IMR-90 (cell line): ENCODE measurements at regions of chr12 and their contacts with region 1.

Region 1: DNA sequence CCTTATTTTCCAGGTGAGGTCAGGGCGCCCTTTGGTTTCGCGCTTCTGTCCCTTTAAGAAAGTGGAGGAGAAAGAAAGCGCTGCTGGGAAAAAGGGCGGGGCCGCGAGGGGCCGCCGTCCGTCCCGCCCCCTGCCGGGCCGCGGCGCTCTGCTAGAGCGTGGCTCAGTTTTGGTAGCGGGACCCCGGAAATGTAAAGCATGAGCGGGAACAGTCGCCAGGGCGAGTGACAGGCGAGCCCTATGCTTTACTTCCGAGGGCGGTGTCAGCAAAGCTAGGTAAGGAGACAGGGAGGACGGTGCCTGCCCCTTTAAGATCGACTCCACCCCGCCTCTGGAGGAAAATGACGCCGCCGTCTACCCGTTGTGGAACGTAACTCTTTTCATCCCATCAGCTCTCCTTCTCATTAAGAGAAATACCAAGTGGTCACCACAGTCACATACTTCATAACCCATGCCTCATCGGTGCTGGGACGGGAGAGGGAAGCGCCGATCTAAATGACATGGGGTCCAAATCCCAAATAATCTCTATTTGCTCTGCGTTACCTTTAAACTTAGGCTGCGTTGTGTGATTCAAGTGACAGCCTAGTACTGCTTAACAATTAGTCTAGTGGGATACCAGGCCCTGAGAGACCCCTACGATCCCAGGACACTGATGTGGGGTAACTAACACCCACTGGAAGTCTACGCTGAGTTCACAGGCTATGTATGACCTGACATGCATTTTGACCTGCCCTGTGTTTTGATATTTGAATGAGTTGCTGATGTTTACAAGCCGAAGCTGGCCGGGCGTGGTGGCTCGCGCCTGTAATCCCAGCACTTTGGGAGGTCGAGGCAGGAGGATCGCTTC is at the start of gene ETFBKMT:
- DNase-seq: peak; percentile 70
- ATAC-seq: peak; percentile 97
- H3K4me3 ChIP-seq: peak within 1 kb of the TSS; percentile 64
- H3K27ac ChIP-seq: peak within 1 kb of the TSS; percentile 95
- H3K4me1 ChIP-seq: peaks cover 2% of the 10 kb centered on the region
- H3K27me3 ChIP-seq: no peaks in the 10 kb centered on the region
- CTCF ChIP-seq: peak; percentile 31
- POLR2A ChIP-seq: peak; percentile 42; the same call in 1 of the 2 replicates
- RAD21 ChIP-seq: peak; percentile 3; the same call in 1 of the 2 replicates
- total RNA-seq, gene ETFBKMT: 2.5 and 3.3 TPM in 2 replicates

Region 2: DNA sequence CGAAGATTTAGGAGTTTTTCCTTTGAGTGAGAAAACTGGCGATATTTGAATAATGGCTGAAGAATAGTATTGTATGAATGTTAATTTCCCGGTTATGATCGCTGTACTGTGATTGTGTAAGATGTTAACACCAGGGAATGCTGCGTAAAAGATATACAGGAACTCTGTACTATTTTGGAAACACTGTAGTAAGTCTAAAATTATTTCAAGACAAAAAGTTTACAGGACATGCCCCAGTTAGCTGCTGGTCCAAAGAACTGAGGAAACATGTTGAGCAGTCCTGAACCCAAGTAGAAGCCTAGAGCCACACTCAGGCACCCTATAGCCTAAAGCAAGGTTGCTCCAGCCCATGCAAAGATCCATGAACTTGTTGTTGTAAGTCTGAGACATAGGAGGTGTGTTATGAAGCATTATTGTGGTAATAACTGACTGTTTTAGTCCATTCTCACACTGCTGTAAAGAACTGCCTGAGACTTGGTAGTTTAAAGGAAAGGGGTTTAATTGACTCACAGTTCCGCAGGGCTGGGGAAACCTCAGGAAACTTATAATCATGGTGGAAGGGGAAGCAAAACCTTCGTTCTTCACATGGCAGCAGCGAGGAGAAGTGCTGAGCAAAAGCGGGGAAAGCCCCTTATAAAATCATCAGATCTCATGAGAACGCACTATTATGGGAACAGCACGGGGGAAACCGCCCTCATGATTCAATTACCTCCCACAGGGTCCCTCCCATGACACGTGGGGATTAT is 200.1 kb after region 1 on chr12:
- CTCF ChIA-PET with region 1: no interaction called
- POLR2A ChIA-PET with region 1: no interaction called
- dilution Hi-C with region 1: no loop called
- in situ Hi-C with region 1: no loop called
- intact Hi-C with region 1: no loop called
- DNase-seq: no peak
- ATAC-seq: no peak
- H3K4me3 ChIP-seq: no peak overlapping the region
- H3K27ac ChIP-seq: no peak overlapping the region
- H3K4me1 ChIP-seq: no peaks in the 10 kb centered on the region
- H3K27me3 ChIP-seq: no peaks in the 10 kb centered on the region
- CTCF ChIP-seq: no peak
- POLR2A ChIP-seq: no peak
- RAD21 ChIP-seq: no peak

Region 3: DNA sequence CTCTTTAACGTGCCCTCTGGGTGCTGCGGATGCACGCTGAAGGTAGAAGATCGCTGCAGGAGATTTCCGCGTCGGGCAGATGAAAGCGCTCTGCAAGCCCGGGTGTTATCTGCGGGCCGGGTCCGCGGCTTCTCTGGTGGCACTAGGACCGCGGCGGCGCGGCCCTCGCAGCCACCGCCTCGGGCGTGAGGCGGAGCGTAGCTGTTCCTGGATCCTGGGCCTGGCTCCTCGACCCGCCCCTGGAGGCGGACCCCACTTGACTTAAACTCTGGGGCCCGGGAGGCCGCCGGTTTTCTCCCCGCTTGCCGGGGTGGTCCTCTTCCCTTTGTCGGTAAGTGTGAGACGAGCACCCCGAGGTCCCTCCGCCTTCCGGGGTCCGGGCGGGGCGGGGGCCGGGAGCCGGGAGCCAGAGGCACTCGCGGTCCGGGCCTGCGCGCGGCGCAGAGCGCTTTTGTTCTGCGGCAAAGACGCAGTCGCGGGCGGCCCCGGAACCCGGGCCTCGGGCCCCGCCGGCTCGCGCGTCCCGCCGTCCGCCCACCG is 299.9 kb after region 1 on chr12 and contains the start of gene RESF1:
- CTCF ChIA-PET with region 1: interaction called, 3 read pairs
- POLR2A ChIA-PET with region 1: no interaction called
- dilution Hi-C with region 1: no loop called
- in situ Hi-C with region 1: no loop called
- intact Hi-C with region 1: loop called (anchors 1 kb)
- DNase-seq: peak; percentile 76
- ATAC-seq: peak; percentile 98
- H3K4me3 ChIP-seq: peak within 1 kb of the TSS; percentile 61
- H3K27ac ChIP-seq: peak within 1 kb of the TSS; percentile 61
- H3K4me1 ChIP-seq: peaks cover 3% of the 10 kb centered on the region
- H3K27me3 ChIP-seq: no peaks in the 10 kb centered on the region
- CTCF ChIP-seq: 0 out of 2 replicates have a peak, but pooled peaks have one; percentile 4
- POLR2A ChIP-seq: 0 out of 2 replicates have a peak, but pooled peaks have one; percentile 48
- RAD21 ChIP-seq: peak; percentile 1; the same call in 1 of the 2 replicates
- total RNA-seq, gene RESF1: 7.3 and 10.3 TPM in 2 replicates

Region 4: GRCh38 chr12:32302218-32303173 is 643.2 kb after region 1 on chr12:
- CTCF ChIA-PET with region 1: no interaction called
- POLR2A ChIA-PET with region 1: no interaction called
- dilution Hi-C with region 1: no loop called
- in situ Hi-C with region 1: loop called (anchors 10 kb)
- intact Hi-C with region 1: no loop called
- DNase-seq: no peak
- ATAC-seq: peak; percentile 51; the same call in 1 of the 2 replicates
- H3K4me3 ChIP-seq: no peak overlapping the region
- H3K27ac ChIP-seq: no peak overlapping the region
- H3K4me1 ChIP-seq: no peaks in the 10 kb centered on the region
- H3K27me3 ChIP-seq: no peaks in the 10 kb centered on the region
- CTCF ChIP-seq: peak; percentile 35
- POLR2A ChIP-seq: no peak
- RAD21 ChIP-seq: peak; percentile 39

Region 5: GRCh38 chr12:32455607-32456071 is 796.3 kb after region 1 on chr12:
- CTCF ChIA-PET with region 1: no interaction called
- POLR2A ChIA-PET with region 1: no interaction called
- dilution Hi-C with region 1: no loop called
- in situ Hi-C with region 1: no loop called
- intact Hi-C with region 1: loop called (anchors 10 kb)
- DNase-seq: peak; percentile 82
- ATAC-seq: peak; percentile 83
- H3K4me3 ChIP-seq: peak overlapping the region; percentile 46; the same call in 1 of the 2 replicates
- H3K27ac ChIP-seq: no peak overlapping the region
- H3K4me1 ChIP-seq: peaks cover 4% of the 10 kb centered on the region; the same call in 1 of the 2 replicates
- H3K27me3 ChIP-seq: no peaks in the 10 kb centered on the region
- CTCF ChIP-seq: peak; percentile 75
- POLR2A ChIP-seq: no peak
- RAD21 ChIP-seq: peak; percentile 81

Region 6: DNA sequence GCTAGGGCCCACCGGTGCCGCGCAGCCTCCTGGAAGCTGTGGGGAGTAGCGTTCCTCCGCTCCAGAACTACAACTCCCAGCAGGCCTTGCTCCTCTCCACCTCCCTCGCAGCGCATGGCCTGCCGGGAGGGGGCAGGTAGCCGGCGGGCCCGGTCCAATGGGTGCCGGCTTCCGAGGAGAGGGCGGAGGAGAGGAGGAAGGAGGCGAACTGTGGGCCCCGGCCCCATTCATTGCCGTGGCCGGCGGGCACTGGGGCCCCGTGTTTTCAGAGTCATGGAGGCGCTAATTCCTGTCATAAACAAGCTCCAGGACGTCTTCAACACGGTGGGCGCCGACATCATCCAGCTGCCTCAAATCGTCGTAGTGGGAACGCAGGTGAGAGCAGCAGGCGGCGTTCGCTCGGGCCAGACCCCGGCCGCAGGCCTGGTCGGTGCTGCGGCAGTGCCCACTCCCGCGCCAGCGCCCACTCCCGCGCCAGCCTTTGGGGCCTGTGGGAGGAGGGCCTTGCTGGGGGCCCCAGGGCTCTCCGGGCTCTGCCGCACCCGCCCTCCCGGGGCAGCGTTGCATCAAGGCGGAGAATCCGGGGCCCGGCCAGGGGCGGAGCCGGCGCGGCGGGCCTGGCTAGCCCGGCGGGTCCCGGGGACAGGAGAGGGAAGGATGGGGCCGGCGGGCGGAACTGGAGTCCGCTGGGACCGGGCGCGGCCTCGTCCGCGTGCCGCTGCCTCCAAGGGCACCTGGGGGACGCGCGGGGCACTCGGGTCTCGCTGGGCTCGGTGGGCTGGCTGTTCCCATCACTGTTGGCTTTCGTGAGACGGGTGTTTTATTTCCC is 1020.0 kb after region 1 on chr12 and contains the start of gene DNM1L:
- CTCF ChIA-PET with region 1: no interaction called
- POLR2A ChIA-PET with region 1: no interaction called
- dilution Hi-C with region 1: no loop called
- in situ Hi-C with region 1: loop called (anchors 25 kb)
- intact Hi-C with region 1: loop called (anchors 5 kb)
- DNase-seq: peak; percentile 96
- ATAC-seq: peak; percentile 97
- H3K4me3 ChIP-seq: peak within 1 kb of the TSS; percentile 87
- H3K27ac ChIP-seq: peak within 1 kb of the TSS; percentile 84
- H3K4me1 ChIP-seq: peaks cover 5% of the 10 kb centered on the region
- H3K27me3 ChIP-seq: no peaks in the 10 kb centered on the region
- CTCF ChIP-seq: no peak; the same call in 1 of the 2 replicates
- POLR2A ChIP-seq: peak; percentile 94
- RAD21 ChIP-seq: no peak
- total RNA-seq, gene DNM1L: 70.1 and 102 TPM in 2 replicates